ENCODE measurements at regions of chr6 and their contacts with region 1.

Region 1: DNA sequence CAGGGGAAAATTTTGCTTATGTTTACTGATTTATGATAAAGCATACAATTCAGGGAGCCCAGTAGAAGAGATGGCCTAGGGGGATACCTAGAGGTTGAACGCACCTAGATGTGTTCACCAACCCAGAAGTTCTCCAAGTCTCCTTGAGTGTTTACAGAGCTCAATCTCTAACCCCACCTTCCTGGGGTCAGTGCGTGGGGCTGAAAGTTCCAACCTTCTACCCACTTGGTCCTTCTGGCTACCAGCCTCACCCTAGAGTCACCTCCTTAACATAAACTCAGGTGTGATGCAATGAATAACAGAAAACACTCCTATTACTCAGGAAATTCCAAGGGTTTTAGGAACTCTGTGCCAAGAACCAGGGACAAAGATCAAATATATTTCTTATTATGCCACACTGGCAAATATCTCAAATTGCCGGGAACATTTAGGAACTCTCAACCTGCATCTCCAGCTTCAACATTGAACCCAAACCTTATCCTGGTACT is 26.4 kb downstream of the AFG1L start:
- DNase-seq: peak; percentile 20

Region 2: GRCh38 chr6:108610270-108610839 is 289.1 kb after region 1 on chr6:
- intact Hi-C with region 1: loop called in 1 of 2 experiments (anchors 5 kb)
- DNase-seq: no peak

Region 3: DNA sequence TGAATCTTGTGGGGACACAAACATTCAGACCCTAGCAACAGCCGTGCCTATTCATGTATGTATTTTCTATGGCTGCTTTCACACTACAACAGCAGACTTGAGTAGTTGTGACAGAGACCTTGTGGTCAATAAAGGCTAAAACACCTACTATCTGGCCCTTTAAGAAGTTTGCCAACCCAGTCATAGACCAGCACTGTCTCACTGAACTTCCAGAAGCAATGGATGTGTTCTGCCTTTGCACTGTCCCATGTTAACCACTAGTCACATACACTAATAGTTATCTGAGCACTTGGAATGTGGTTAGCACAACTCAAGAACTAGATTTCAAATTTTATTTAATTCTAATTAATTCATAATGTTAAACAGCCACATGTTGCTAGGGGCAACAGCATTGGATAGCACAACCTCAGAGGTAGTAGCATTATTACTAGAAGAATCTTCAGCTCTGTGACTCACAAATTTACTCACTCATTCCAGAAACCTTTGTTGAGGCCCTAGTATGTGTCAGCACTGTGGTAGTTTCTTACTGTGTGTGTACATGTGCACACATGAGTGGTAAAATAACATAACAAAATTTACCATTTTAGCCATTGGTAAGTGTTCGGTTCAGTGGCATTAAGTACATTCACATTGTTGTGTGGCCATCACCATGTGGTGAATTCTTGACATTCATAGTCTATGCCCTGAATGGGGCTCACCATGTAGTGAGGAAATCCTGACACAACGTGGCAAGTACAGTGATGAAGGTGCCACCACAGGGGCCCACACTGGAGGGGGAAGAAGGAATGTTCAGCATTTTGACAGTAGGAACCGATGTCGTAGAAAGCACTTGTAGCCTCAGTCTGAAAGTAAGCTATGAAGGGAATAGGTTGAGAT is 881.4 kb after region 1 on chr6:
- intact Hi-C with region 1: no loop called
- DNase-seq: no peak

Measured in posterior vena cava (tissue), 2 donors.